Lower leg skin (tissue), 4 donors: ENCODE measurements at regions of chr17 and their contacts with region 1.

Region 1: DNA sequence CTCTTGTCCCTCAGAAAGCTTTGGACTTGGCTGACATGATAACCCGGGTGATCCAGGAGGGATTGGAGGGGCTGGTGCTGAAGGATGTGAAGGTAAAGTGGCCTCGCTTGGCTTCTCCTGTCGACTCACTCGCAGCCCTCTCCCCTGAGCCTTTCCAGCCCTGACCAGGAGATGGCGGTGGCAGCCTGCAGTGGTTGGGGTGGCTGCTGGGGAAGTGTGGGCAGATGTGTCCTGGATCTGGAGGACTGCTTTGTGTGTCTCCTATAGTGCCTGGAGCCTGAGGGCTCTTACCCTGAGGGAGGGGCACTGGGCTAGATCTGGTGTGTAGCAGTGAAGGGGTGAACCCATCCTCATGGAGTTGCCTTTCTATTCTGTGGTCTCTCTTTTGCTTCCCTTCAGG is 17.9 kb downstream of the LIG3 start:
- DNase-seq: peak; percentile 42 to 94
- H3K4me3 ChIP-seq: no peak overlapping the region
- CTCF ChIP-seq: peak in 1 of 3 donors; percentile 56
- POLR2A ChIP-seq: no peak

Region 2: DNA sequence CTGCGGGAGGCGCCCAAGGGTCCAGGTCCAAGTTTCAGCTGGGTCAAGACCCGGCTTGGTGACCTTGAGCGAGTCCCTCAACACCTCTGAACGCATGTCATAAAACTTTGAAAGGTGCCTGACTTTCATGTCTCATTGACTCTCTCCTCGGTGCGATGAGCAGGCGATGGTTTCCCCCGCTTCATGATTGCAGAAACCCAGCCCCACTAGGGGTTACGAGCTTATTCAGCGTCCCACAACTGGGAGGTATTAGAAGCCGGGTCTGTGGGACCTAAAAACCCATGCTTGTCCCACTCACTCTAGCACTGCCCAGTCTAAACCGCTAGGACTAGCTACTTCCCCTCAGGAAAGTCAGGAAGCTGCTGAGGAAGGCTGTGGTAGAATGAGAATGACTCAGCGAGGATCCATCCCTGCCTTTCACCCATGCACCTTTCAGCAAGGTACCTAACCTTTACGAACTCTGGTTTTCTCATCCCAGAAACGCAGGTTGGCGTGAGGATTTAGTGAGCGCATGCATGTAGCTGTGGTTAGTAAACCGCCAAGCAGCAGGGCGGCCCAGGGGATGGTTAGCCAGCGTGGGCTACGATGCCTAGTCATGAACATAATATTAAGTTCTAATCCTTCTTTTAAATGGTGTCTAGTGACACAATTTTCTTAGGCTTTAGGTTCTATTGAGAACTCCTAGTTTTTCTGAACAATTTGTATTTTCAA is 91.5 kb after region 1 on chr17:
- intact Hi-C with region 1: loop called (anchors 10 kb)
- DNase-seq: peak; percentile 26 to 88
- H3K4me3 ChIP-seq: no peak overlapping the region
- CTCF ChIP-seq: no peak
- POLR2A ChIP-seq: no peak

Region 3: DNA sequence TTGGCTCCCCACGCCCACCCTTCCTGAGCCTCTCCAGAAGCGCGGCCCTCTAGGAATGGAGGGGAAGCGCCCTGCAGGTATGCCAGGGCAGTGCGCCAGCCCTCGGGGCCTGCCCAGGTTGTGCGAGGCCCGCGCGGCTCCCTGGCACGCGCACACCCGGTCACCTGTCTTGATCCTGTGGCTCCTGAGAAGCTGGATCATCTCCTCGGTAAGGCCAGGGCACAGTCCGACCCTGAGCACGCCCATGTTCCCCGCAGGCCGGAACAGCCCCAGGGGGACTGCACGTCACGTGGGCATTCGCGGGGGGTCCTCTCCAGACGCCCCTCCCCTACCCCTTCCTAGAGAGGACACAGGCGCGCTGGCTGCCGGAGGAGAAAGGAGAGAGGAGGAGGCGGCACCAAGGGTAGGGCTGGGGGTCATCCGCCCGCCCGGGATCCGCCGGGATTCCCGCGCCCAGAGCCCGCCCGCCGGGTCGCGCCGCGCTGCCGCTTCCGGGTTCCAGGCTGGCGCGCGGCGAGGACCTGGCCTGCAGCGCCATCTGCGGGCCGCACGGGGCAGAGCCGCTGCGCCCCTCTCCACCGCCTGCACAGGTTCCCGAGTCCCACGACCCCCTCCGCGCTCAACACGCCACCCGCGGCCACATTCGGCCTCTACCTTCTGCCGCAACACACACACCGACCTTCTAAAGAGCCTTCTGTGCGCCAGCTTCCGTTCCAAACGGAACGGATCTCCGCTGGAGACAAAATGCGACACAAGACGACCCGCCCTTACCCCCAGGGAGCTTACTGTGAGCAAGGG is 121.4 kb after region 1 on chr17 and contains the start of gene RAD51D:
- intact Hi-C with region 1: loop called (anchors 5 kb)
- DNase-seq: peak in 1 of 2 donors; percentile 95
- H3K4me3 ChIP-seq: peak within 1 kb of the TSS; percentile 90
- CTCF ChIP-seq: peak in 1 of 3 donors; percentile 48
- POLR2A ChIP-seq: no peak
- total RNA-seq, gene RAD51D: 2.8 to 5.9 (median 3.8) TPM